ENCODE measurements at regions of chr20 and their contacts with region 1.

Region 1: DNA sequence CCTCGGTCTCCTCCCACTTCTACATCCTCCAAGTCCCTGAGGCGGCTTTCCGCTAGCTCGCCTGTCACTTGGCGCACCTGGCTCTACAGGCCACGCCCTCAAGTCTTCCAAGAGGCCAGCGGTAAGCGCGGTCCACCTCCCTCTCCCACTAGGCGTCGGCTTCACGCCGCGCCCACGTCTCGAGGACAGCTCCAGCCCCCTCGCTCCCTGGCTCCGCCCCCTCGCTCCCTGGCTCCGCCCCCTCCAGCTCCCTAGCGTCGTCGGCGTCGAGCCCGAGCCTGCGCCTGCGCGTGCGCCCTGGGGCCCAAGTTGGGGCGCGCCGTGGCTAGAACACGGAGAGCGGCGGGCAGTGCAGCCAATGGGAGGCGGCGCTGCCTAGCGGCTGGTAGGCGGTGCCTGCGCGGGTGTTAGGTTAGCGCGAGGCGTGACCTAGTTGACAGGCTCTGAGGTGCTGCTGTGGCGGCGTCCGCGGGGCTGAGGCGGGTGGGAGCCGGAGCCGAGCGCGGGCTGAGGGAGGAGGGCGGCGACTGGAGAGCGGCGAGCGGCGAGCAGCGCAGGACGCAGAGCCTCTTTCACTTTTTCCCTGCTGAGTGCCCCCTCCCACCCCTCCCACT is at the start of gene MACROD2:
- DNase-seq: peak; percentile 96
- H3K4me3 ChIP-seq: peak within 1 kb of the TSS; percentile 64 to 75 (median 68)
- H3K27ac ChIP-seq: peak within 1 kb of the TSS; percentile 80 to 88 (median 84)
- H3K4me1 ChIP-seq: peaks cover 0 to 6% (median 1%) of the 10 kb centered on the region in 4 donors
- H3K27me3 ChIP-seq: no peaks in the 10 kb centered on the region
- CTCF ChIP-seq: peak in 4 of 5 experiments; percentile 11 to 33 (median 19)
- EP300 ChIP-seq: no peak
- POLR2A ChIP-seq: peak; percentile 71
- total RNA-seq, gene MACROD2: 4.6 to 33.0 (median 8.3) TPM

Region 2: GRCh38 chr20:15411781-15412180 is 1416.6 kb after region 1 on chr20:
- in situ Hi-C with region 1: no loop called
- intact Hi-C with region 1: loop called (anchors 5 kb)
- DNase-seq: no peak
- H3K4me3 ChIP-seq: no peak overlapping the region
- H3K27ac ChIP-seq: no peak overlapping the region
- H3K4me1 ChIP-seq: no peaks in the 10 kb centered on the region
- H3K27me3 ChIP-seq: no peaks in the 10 kb centered on the region
- CTCF ChIP-seq: no peak
- EP300 ChIP-seq: no peak
- POLR2A ChIP-seq: no peak